ENCODE measurements at regions of chr2 and their contacts with region 1.

Region 1: DNA sequence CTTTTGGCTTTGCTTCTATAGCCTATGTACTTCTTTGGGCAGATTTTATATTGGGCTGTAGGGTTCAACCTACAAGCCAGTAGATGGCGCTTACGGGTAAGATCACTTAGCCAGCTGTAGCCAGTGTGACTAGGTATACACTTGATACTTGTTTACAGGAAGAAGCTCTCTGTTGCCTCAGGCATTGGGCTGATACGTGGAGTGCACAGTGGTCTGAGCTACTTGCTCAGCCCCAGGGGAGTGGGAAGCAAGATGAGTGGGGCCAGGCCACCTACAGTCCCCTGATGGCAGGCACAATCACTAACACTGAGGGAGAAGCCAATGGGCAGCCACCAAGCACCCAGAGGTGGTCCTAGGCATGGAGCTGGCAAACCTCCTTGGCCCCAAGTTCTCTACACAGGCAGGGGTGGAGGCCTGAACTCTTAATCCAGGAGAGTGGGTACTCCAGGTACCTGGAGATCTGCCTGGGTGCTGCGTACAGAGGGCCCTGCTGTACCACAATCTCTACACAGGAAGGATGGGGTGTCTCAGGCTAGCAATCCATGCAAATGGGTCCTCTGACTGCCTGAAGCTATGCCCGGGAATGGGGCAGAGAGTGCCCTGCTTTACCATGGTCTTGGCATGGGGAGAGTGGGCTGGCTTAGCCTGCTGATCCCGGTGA is 122.2 kb downstream of the NCOA1 start:
- DNase-seq: peak; percentile 30
- H3K4me3 Mint-ChIP-seq: no peak overlapping the region
- H3K27ac Mint-ChIP-seq: peak overlapping the region; percentile 76
- H3K4me1 Mint-ChIP-seq: peaks cover 12% of the 10 kb centered on the region
- H3K27me3 Mint-ChIP-seq: no peaks in the 10 kb centered on the region

Region 2: DNA sequence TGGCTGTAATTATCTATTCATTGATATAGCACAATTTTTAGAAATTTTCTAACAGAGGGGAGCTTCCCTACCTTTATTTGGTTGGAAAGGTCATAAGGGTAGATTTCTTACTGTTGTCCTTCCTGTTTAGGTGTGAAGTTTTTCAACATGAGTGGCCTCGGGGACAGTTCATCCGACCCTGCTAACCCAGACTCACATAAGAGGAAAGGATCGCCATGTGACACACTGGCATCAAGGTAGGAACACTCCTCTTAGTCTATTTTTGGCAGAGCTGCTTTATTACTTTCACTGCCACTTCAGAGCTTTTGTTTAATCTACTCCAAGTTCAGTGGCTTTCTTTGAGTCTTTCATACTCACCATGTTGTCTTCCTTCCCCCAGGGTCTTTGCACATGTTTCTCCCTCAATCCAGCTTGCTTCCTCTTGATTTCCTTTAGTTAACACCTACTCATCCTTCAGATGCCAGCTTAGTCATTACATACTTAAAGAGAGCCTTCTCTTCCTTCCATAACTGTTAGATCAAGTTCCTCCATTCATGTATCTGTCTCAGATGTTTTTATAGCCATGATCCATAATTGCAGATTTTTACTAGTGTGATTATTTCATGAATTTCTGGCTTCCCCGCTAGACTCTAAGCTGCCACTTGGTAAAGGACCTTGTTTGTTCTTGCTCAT is 45.4 kb after region 1 on chr2:
- intact Hi-C with region 1: no loop called
- DNase-seq: no peak
- H3K4me3 Mint-ChIP-seq: no peak overlapping the region
- H3K27ac Mint-ChIP-seq: no peak overlapping the region
- H3K4me1 Mint-ChIP-seq: no peaks in the 10 kb centered on the region
- H3K27me3 Mint-ChIP-seq: no peaks in the 10 kb centered on the region

Region 3: DNA sequence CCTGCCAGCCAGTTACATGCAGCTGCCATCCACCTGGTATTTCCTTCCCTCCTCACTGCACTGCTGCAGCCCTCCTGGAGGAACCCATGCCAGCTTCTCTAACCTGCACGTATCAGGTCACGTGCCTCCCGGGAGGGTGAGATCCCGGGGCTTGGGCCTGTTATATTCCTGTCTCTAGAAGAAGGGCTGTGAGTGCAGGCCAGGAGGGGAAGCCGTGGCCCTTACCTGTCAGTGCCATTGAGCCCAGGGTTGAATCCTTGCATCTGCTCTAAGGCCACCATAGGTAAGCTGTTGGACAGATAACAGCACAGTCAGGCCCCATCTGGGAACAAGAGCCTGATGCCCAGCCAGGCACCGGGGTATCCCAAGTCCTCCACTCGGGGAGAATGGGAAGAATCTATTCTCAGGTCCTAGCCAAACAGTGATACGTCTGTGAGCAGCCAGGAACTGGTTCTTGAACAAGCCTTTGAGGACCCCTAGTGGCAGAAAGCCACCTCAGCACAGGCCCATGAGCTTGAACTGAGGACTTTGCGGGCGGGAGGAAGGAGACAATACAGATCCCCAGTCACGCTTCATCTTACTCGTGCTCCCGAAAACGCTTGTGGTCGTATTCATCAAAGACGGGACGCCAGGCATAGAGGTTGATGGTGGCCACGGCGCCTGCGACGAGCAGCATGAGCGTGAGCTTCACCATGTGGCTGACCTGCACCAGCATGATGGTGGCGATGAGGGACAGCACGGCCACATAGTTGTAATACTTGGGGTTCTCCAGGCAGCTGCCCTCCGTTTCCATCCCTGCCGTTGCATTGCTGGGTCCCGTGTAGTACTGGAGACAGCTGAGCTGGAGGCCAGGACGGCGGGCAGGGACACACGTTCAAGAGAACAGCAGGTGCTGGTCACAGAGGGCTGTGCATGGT is 214.3 kb after region 1 on chr2:
- intact Hi-C with region 1: loop called (anchors 5 kb)
- DNase-seq: peak; percentile 61
- H3K4me3 Mint-ChIP-seq: no peak overlapping the region
- H3K27ac Mint-ChIP-seq: peak overlapping the region; percentile 93
- H3K4me1 Mint-ChIP-seq: peaks cover 21% of the 10 kb centered on the region
- H3K27me3 Mint-ChIP-seq: no peaks in the 10 kb centered on the region